ENCODE measurements at regions of chr3 and their contacts with region 1.

Region 1: DNA sequence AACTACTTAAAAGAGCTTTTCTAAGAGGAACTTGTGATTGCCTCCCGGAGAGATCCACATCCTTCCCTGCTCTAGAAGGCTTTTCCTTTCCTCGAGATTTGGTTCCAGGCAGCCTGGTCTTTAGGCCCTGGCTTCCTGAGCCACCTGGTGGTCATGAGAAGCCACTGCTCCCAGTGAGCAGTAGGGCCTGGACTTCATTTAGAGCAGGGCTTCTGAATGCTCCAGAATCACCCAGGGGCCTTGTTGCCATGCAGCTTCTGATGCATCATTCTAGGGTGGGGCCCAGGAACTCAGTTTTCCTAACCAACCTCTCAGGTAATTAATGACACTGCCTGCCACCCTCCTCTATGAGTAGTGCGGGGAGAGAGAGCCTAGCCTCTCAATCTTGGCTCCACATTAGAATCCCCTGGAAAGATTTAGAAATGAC is 29.6 kb downstream of the PSMD6 start:
- DNase-seq: peak; percentile 82
- H3K4me3 ChIP-seq: no peak overlapping the region
- H3K27ac ChIP-seq: peak overlapping the region; percentile 50
- H3K4me1 ChIP-seq: peaks cover 10% of the 10 kb centered on the region
- H3K27me3 ChIP-seq: no peaks in the 10 kb centered on the region
- CTCF ChIP-seq: peak; percentile 97 to 99

Region 2: DNA sequence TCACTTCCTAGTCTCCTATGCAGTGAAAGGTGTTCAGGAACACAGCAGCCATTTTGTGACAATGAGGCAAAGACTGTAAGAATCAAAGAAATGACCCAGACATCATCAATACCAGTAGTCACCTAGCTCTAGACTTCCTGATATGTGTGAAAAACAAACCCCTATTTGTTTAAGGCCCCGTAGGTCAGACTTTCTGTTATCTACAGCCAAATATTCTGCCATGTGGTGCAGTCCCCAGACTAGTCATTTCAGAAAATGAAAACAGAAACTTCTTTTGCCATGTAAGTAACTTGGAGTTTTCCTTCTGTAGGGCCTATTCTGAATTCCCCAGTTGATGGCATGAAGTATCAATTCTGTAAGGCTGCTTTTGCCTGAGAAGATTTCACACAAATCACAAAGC is 522.9 kb before region 1 on chr3:
- CTCF ChIA-PET with region 1: no interaction called
- dilution Hi-C with region 1: no loop called
- in situ Hi-C with region 1: no loop called
- intact Hi-C with region 1: no loop called
- DNase-seq: no peak
- H3K4me3 ChIP-seq: no peak overlapping the region
- H3K27ac ChIP-seq: no peak overlapping the region
- H3K4me1 ChIP-seq: no peaks in the 10 kb centered on the region
- H3K27me3 ChIP-seq: no peaks in the 10 kb centered on the region
- CTCF ChIP-seq: no peak

Region 3: DNA sequence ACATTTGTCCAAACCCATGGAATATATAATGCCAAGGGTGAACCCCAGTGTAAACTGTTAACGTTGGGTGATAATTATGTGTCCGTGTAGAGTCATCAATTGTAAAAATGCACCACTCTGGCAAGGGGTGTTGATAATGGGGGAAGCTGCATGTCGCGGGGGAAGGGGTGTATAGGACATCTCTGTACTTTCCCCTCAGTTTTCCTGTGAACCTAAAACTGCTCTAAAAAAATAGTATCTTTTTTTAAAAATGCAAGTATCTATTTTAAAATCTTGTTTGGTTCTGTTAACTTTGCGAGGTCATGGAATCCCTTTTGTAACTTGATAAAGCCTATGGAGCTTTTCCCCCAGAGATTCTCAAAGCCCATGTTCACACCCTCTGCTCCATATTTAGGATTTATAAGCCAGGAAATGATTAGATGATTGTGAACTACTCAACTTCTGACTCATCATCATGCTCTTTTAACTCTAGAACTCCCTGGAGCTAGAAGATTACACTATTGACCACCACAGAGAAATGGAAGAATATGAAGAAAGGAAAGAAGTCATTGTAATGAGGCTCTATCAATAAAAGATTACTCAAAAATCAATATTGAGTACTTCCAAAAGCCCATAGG is 230.6 kb before region 1 on chr3:
- CTCF ChIA-PET with region 1: no interaction called
- dilution Hi-C with region 1: no loop called
- in situ Hi-C with region 1: no loop called
- intact Hi-C with region 1: no loop called
- DNase-seq: peak; percentile 39
- H3K4me3 ChIP-seq: no peak overlapping the region
- H3K27ac ChIP-seq: no peak overlapping the region
- H3K4me1 ChIP-seq: peaks cover 22% of the 10 kb centered on the region
- H3K27me3 ChIP-seq: no peaks in the 10 kb centered on the region
- CTCF ChIP-seq: no peak

Region 4: GRCh38 chr3:63824309-63824708 is 169.4 kb before region 1 on chr3:
- CTCF ChIA-PET with region 1: no interaction called
- dilution Hi-C with region 1: no loop called
- in situ Hi-C with region 1: no loop called
- intact Hi-C with region 1: loop called (anchors 5 kb)
- DNase-seq: peak; percentile 96
- H3K4me3 ChIP-seq: no peak overlapping the region
- H3K27ac ChIP-seq: peak overlapping the region; percentile 84
- H3K4me1 ChIP-seq: peaks cover 18% of the 10 kb centered on the region
- H3K27me3 ChIP-seq: no peaks in the 10 kb centered on the region
- CTCF ChIP-seq: no peak

Region 5: DNA sequence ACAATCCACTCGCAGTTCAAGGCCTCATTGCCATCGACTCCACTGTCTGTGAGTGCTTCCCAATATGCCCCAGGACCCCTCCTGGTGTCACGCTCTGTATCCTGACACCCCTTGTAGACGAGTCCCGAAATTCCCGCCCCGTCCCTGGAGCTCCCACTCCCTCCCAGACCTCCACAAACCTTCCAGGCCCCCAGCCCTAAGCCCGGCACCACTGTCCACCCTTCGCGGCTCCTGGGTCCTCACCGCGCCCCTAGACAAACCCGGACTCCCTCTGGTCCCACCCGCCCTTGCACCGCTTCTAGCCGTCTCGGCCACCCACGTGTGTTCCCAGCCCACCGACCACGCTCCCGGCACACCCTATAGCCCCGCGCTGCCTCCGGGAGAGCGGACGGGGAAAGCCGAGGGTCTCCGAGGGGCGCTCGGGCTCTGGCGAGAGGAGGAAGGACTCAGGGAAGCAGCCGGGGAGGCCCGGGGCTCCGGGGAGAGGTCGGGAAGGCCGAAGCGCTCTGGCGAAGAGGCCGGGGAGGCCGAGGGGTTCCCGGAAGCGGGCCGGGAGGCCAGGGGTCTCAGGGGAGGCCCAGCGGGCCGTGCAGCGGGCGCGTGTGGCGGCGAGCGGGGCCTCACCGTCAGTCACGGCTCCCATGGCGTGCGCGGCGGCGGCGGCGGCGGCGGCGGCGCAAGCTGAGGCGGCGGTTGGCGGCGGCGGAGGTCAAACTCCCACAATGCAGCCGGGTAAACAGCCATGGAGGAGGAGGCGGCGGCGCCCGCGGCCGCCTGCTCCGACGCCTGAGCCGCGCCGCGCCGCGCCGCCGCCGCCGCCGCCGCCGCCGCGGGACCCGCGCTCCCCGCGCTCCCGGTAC is 130.3 kb before region 1 on chr3 and contains the starts of genes ATXN7 and THOC7:
- CTCF ChIA-PET with region 1: no interaction called
- dilution Hi-C with region 1: no loop called
- in situ Hi-C with region 1: no loop called
- intact Hi-C with region 1: loop called (anchors 5 kb)
- DNase-seq: peak; percentile 64
- H3K4me3 ChIP-seq: peak within 1 kb of the TSS; percentile 92 to 99 (median 94)
- H3K27ac ChIP-seq: peak within 1 kb of the TSS; percentile 84
- H3K4me1 ChIP-seq: peaks cover 12% of the 10 kb centered on the region
- H3K27me3 ChIP-seq: no peaks in the 10 kb centered on the region
- CTCF ChIP-seq: no peak
- total RNA-seq, gene ATXN7: 21.2 to 30.5 TPM
- total RNA-seq, gene THOC7: 34.5 to 87.5 TPM

Region 6: GRCh38 chr3:63937661-63938651 is 55.7 kb before region 1 on chr3:
- CTCF ChIA-PET with region 1: no interaction called
- dilution Hi-C with region 1: loop called (anchors 5 kb)
- in situ Hi-C with region 1: no loop called
- intact Hi-C with region 1: no loop called
- DNase-seq: peak; percentile 84
- H3K4me3 ChIP-seq: no peak overlapping the region
- H3K27ac ChIP-seq: no peak overlapping the region
- H3K4me1 ChIP-seq: peaks cover 43% of the 10 kb centered on the region
- H3K27me3 ChIP-seq: no peaks in the 10 kb centered on the region
- CTCF ChIP-seq: no peak

Region 7: GRCh38 chr3:63961891-63962290 is 31.8 kb before region 1 on chr3:
- CTCF ChIA-PET with region 1: interaction called, 5 read pairs
- dilution Hi-C with region 1: no loop called
- in situ Hi-C with region 1: no loop called
- intact Hi-C with region 1: loop called (anchors 1 kb)
- DNase-seq: peak; percentile 71
- H3K4me3 ChIP-seq: no peak overlapping the region
- H3K27ac ChIP-seq: no peak overlapping the region
- H3K4me1 ChIP-seq: peaks cover 38% of the 10 kb centered on the region
- H3K27me3 ChIP-seq: no peaks in the 10 kb centered on the region
- CTCF ChIP-seq: peak; percentile 62 to 73

Region 8: DNA sequence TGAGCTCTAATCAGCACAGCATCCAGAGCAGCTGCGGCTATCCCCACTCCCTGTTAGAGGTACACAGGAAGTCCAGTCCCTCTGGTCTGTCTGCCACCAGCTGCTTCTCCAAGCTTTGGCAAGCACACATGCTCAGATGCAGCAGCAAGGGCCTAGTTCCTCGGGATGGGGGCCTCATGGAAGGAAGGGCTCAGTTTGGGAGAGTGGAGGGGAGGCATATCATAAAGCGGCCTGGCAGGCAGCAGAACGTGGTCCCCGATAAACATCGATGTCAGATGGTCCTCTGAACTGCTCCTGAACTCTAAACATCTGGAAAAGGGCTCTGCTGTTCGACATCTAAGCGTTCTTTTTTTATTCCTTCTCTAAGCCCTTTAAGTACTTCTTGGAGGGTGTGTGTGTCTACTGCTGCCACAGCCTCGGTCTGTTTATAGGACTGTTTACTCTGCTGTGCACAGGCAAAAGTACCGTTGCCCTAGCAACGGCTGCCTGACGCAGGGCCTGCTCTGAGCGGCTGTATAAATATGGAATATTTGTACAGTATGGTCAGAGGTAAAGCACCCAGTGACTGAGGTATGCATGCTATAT is 157.0 kb after region 1 on chr3:
- CTCF ChIA-PET with region 1: no interaction called
- dilution Hi-C with region 1: no loop called
- in situ Hi-C with region 1: no loop called
- intact Hi-C with region 1: no loop called
- DNase-seq: no peak
- H3K4me3 ChIP-seq: no peak overlapping the region
- H3K27ac ChIP-seq: no peak overlapping the region
- H3K4me1 ChIP-seq: peaks cover 17% of the 10 kb centered on the region
- H3K27me3 ChIP-seq: no peaks in the 10 kb centered on the region
- CTCF ChIP-seq: no peak

Region 9: DNA sequence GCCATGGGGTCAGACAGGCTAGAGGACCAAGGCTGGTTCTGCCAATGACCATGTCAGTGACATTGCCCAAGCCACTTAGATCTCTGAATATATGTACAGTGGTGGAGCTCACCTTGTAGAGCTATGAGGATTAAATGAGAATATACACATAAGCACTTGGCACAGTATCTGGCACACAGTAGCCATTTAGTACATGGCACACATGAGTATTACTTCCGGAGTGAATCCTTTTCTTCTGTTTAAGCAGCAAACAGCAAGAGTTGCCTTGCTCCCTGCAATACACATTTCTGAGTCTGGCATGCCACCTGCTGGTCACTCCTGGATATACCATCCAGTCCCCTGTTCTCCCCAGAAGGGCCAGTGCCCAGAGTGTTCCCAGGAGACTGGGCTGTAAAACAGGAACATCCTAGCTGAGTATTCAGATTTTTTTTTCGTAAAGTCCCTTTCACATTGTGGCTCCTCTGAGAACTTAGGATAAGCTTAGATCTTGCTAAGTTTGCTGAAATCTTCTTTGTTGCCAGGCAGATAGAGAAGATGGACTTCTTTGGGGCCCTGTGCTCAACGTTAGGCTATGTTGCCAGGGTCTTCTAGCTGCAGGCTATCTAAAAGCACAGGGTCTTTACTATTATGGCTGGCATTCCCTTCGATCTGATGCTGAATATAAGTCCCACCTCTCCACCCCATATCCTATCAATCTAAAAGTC is 490.8 kb after region 1 on chr3:
- CTCF ChIA-PET with region 1: no interaction called
- dilution Hi-C with region 1: no loop called
- in situ Hi-C with region 1: no loop called
- intact Hi-C with region 1: loop called (anchors 1 kb)
- DNase-seq: peak; percentile 58
- H3K4me3 ChIP-seq: no peak overlapping the region
- H3K27ac ChIP-seq: no peak overlapping the region
- H3K4me1 ChIP-seq: peaks cover 4% of the 10 kb centered on the region
- H3K27me3 ChIP-seq: no peaks in the 10 kb centered on the region
- CTCF ChIP-seq: peak; percentile 73 to 88

Measured in mammary epithelial cell (primary cell).